ENCODE measurements at regions of chr3 and their contacts with region 1.

Region 1: DNA sequence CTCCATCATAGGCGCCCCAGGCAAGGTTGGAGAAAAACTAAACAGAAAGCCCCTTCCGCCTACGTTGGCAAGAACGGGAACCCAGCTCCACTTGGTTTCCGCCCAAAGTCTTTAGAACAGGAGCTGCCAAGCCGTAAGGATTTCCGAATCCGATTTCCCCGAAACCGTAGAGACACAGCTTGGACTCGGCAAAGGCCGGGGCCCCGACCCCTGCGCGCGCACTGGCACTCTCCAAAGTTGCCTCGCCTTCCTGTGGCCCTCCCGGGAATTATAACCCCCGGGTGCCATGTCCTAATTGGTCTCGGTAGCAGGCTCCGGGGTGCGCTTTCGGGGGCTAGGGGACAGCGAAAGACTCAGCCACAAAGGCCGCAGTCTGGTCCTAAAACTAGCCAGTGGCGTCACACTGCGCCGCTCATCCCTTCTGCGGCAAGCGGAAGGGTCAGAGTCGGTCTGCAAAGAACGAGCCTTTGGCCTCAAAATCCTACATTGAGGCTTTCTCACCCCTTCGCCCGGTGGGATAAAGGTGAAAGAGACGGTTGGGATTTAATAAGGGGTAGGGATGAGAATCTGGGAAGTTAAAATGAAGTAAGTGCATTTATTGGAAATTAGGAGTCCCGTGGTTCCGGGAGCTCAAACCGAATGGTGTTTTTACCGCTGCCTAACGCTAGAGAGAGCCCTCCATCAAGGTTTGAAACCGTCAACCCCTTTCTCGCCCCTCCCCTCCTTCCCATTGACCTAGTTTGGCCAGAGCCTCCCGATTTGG is 6.8 kb downstream of the BCL6 start:
- DNase-seq: peak; percentile 93

Region 2: DNA sequence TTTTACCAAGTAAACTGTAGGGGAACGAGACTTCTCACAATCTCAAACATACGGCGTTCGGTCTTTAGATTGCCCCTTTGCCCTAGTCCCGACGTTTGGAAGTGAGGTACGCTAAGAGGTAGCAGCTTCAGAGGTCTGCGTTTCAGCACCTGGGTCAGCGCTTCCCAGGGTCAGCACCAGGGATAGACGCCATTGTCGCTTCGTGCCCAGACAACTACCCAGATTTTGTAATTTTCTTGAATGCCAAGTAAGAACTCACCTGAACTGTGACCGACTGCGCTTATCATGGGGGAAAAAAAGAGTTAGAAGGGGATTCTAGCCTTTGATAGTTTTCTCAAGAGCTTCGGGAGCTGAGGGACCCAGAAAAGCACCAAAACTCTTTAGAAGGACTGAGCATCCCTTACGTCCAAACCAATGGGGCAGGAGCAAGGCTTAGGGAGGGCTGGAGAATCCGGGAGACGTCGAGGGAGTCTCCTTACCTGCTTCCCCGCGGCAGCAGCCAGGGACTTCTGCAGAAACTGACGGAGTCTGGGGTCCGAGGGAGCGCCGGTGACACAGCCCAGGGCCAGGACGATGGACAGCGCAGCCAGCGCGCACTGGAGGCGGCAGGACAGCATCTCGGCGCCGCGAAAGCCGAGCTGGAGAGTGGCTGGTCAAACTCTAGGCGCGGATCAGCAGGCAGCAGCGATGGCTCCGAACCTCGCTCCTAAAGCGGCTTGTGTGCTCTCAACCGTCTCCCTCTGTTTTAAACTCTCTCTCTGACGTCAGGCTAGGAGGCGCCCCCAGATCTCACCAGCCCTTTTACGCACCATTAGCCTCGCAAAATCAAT is 68.6 kb before region 1 on chr3 and contains the start of gene SST:
- intact Hi-C with region 1: no loop called
- DNase-seq: no peak
- total RNA-seq, gene SST: not detected

Region 3: GRCh38 chr3:188262913-188263683 is 524.6 kb after region 1 on chr3:
- intact Hi-C with region 1: loop called (anchors 5 kb)
- DNase-seq: no peak

Region 4: DNA sequence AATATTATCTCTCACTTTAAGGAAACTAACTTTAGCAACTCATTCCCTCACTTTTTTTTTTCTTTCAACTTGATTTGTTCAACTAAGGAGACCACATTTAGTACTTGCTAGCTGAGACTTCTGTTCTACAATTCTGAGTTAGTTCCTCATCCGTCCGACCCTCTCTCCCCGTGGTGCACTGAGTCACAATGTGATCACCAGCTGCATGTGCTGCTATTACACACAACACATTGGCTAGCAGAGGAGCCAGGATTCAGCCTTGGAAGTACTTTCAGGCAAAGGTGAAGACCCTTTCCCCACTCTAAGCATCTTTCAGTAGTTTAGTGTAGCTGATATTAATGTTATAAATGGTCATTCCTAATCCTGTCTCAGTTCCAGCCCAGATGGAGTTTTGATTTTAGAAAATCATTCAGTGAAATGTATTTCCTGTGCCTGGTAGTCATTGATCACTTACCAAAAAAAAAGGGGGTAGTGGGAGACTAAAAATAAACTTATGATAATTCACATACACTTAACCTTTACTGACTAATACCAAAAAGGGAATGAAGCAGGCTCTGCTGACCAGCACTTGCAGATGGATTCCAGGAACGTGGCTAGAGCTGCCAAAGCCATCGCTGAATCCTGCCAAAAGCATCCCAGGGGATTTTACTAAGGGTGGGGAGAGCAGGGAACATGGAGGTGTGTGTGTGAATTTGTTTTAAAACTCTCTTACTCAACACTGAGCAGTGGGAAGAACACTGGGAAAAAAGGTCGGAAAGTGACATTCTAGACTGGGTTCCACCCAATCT is 840.3 kb after region 1 on chr3:
- intact Hi-C with region 1: loop called (anchors 5 kb)
- DNase-seq: peak; percentile 81

Region 5: DNA sequence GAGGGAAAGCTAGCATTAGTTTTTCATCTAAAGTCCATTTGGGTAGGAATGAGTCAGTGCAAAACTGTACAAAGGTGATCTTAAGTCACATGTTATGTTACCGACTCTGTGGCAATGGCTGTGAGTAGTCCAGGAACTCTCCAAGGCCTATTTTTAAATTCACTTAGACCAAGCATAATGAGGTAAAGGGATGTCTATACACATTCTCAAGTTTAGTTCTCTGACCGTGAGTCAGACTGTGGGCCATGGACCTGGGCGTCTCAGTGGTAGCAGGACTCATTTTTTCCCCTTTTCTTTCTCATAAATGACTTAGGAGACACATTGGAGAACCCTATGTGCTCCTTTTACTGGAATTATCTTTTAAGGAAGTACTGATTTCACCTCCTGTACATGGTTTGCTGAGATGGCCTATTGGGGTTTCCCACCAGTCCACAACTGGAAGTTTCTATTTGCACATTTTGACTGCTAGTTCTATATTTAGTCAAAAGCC is 944.6 kb after region 1 on chr3:
- intact Hi-C with region 1: loop called (anchors 5 kb)
- DNase-seq: no peak

Region 6: GRCh38 chr3:188954590-188955208 is 1216.2 kb after region 1 on chr3:
- intact Hi-C with region 1: loop called (anchors 2 kb)
- DNase-seq: peak; percentile 92

Region 7: GRCh38 chr3:189233225-189233858 is 1494.8 kb after region 1 on chr3:
- intact Hi-C with region 1: loop called (anchors 10 kb)
- DNase-seq: no peak

Measured in cardiac septum (tissue), 1 donor.